ENCODE measurements at regions of chr6 and their contacts with region 1.

Region 1: DNA sequence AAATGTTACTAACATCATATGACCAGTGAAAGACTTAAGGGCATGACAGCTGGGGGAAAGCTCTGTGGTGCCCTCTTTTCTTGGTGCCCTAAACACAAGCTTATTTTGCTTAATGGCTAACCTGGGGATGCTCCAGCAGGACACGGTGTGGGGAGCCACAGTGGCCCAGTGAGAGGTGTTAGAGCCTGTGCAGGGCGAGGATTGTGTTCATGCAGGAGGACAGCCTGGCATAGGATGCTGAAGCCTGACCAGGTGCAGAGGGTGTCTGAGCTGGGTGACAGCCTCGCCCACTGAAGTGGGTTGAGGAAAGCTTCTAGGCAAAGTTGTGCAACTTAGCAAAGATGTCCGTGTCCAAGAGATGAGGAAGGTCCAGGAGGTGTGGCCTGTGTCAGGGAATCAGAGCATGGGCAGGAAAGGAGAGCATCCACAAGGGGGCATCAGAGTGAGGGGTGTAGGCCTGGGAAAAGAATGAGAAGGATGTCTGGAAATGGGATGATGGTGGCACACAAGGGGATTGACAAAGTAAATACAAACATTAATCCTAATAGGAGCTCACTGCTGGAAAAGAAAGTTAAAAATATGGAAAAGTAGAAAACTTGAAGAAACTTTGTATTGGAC is 33.9 kb downstream of the SLC17A4 start:
- DNase-seq: peak in 1 of 2 donors; percentile 68
- ATAC-seq: peak; percentile 48 to 55 (median 54)
- H3K4me3 ChIP-seq: no peak overlapping the region
- H3K4me3 Mint-ChIP-seq: no peak overlapping the region
- H3K27ac ChIP-seq: no peak overlapping the region
- H3K27ac Mint-ChIP-seq: no peak overlapping the region
- H3K4me1 ChIP-seq: no peaks in the 10 kb centered on the region
- H3K4me1 Mint-ChIP-seq: peaks cover 0 to 3% of the 10 kb centered on the region in 2 donors
- H3K27me3 ChIP-seq: no peaks in the 10 kb centered on the region
- H3K27me3 Mint-ChIP-seq: peaks cover 0 to 4% of the 10 kb centered on the region in 2 donors
- CTCF ChIP-seq: peak; percentile 30

Region 2: DNA sequence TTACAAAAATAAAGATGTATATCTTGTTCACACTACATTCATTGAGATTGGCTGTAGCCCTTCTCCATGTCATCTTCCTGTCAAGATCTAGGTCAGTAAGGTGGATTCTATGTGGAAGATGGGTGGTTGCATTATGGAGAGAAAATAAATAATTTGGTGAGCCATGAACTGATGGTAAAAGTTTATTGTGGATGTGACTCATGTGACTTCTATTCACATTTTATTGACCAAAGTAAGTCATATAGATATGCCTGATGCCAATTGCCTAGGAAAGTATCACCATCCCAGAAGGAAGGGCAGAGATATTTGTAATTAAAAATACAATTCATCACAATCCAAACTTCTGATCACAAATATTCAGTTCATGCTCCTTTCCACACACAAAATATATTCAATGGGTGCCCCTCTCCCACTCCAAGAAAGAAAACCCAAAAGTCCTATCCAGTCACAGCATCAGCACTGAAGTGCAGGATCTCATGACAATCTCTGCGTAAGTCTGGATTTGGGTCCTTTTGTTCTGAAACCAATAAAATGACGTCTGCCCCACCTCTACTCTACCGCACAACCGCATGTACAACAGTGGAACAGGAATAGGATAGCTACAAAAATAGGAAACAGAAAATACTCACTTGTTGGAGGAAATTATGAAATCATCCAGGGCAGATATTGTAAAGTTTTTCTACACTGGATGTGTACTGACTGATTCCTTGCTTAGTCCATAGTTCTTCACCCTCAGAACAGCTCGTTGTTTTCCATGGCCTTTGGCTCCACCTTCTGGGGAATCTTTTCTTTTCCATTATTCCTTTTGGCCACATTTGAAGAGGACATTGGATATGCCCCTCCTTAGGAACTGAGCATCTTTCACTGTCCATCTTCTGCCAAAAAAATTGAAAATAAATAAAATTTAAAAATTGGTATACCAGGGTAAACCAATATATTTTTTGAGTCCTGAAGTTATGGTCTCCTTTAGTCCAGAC is 101.8 kb after region 1 on chr6:
- intact Hi-C with region 1: loop called (anchors 1 kb)
- DNase-seq: peak in 1 of 2 donors; percentile 64
- ATAC-seq: no peak
- H3K4me3 ChIP-seq: no peak overlapping the region
- H3K4me3 Mint-ChIP-seq: no peak overlapping the region
- H3K27ac ChIP-seq: no peak overlapping the region
- H3K27ac Mint-ChIP-seq: no peak overlapping the region
- H3K4me1 ChIP-seq: no peaks in the 10 kb centered on the region
- H3K4me1 Mint-ChIP-seq: no peaks in the 10 kb centered on the region
- H3K27me3 ChIP-seq: no peaks in the 10 kb centered on the region
- H3K27me3 Mint-ChIP-seq: peaks cover 3 to 6% of the 10 kb centered on the region in 2 donors
- CTCF ChIP-seq: peak; percentile 33

Region 3: DNA sequence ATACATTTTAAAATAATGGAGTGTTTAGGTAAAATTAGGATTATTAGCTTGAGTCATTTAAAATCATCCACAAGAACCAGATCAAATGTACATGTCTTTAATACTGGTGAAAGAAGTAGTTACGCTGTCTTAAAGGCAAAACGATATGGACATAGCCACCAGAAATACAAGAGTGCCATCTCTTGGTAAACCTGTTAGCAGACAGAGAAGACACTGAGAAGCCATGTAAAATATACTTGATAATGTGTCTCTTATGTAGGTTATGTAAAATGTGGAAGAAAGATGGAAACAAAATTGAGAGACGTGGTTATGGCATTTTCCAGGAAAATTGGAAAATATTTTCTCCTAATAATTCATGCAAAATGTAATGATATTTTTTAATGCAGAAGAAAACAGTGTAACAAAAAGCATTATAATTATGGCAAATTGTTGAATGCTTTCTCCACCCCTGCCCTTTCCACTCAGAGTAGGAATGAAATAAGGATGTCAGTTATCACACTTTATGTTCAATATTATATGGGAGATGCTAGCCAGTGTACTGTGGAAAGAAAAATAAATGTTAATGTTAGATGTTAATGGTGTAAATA is 154.2 kb after region 1 on chr6:
- intact Hi-C with region 1: loop called (anchors 1 kb)
- DNase-seq: peak in 1 of 2 donors; percentile 67
- ATAC-seq: peak in 2 of 3 donors; percentile 31 to 62
- H3K4me3 ChIP-seq: no peak overlapping the region
- H3K4me3 Mint-ChIP-seq: no peak overlapping the region
- H3K27ac ChIP-seq: no peak overlapping the region
- H3K27ac Mint-ChIP-seq: no peak overlapping the region
- H3K4me1 ChIP-seq: no peaks in the 10 kb centered on the region
- H3K4me1 Mint-ChIP-seq: peaks cover 5 to 6% of the 10 kb centered on the region in 2 donors
- H3K27me3 ChIP-seq: no peaks in the 10 kb centered on the region
- H3K27me3 Mint-ChIP-seq: peaks cover 12 to 35% of the 10 kb centered on the region in 2 donors
- CTCF ChIP-seq: peak; percentile 41

Region 4: DNA sequence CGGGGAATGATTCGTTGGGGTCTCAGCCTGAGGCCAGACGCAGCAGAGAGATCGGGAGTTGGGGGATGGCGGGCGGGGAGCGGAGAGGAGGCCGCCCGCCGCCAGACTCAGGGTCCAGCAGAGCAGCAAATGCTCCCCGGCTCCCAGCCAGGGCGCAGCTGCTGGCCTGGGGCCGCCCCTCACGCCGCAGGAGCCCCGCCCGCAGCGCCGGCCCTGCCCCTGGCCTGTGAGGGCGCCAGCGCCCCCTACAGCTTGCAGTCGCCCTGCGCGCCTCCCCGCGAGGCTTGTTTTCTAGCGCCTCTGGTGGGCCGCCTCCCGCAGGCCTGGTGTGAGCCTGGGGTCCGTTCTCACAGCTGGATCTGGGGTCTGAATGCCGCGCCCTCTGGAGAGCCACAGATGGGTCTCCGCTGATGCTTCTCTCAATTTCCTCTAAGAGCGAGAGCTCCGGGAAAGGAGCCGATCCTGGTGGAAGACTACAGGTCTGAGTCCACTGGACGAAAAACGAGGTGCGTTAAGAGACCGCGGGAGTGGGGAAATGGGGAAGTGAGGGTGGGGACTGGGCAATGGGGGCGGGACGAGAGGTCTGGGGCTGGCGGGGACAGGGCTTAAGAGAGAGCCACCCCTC is 204.1 kb after region 1 on chr6:
- intact Hi-C with region 1: loop called (anchors 10 kb)
- DNase-seq: peak; percentile 95 to 97
- ATAC-seq: peak; percentile 96 to 99 (median 96)
- H3K4me3 ChIP-seq: peak overlapping the region; percentile 82
- H3K4me3 Mint-ChIP-seq: peak overlapping the region; percentile 97
- H3K27ac ChIP-seq: peak overlapping the region; percentile 85
- H3K27ac Mint-ChIP-seq: peak overlapping the region; percentile 93 to 96
- H3K4me1 ChIP-seq: peaks cover 14% of the 10 kb centered on the region
- H3K4me1 Mint-ChIP-seq: peaks cover 23 to 26% of the 10 kb centered on the region in 2 donors
- H3K27me3 ChIP-seq: no peaks in the 10 kb centered on the region
- H3K27me3 Mint-ChIP-seq: no peaks in the 10 kb centered on the region
- CTCF ChIP-seq: peak; percentile 99